Activated CD4-positive, alpha-beta T cell treated with anti-CD3 and anti-CD28 coated beads for 36 hours (primary cell): ENCODE measurements at regions of chr4 and their contacts with region 1.

Region 1: GRCh38 chr4:185640811-185641675 is 105.7 kb upstream of the PDLIM3 start:
- DNase-seq: no peak
- ATAC-seq: no peak
- H3K4me3 Mint-ChIP-seq: no peak overlapping the region
- H3K27ac Mint-ChIP-seq: no peak overlapping the region
- H3K4me1 Mint-ChIP-seq: peaks cover 3% of the 10 kb centered on the region
- H3K27me3 Mint-ChIP-seq: peaks cover 22% of the 10 kb centered on the region

Region 2: GRCh38 chr4:186021461-186022167 is 380.6 kb after region 1 on chr4:
- CTCF ChIA-PET with region 1: no interaction called
- POLR2A ChIA-PET with region 1: no interaction called
- intact Hi-C with region 1: loop called (anchors 5 kb)
- DNase-seq: peak; percentile 9
- ATAC-seq: no peak
- H3K4me3 Mint-ChIP-seq: no peak overlapping the region
- H3K27ac Mint-ChIP-seq: no peak overlapping the region
- H3K4me1 Mint-ChIP-seq: no peaks in the 10 kb centered on the region
- H3K27me3 Mint-ChIP-seq: peaks cover 11% of the 10 kb centered on the region

Region 3: GRCh38 chr4:186037692-186038658 is 396.9 kb after region 1 on chr4:
- CTCF ChIA-PET with region 1: interaction called, 28 read pairs
- POLR2A ChIA-PET with region 1: no interaction called
- intact Hi-C with region 1: loop called (anchors 1 to 2 kb)
- DNase-seq: peak; percentile 23
- ATAC-seq: no peak
- H3K4me3 Mint-ChIP-seq: no peak overlapping the region
- H3K27ac Mint-ChIP-seq: no peak overlapping the region
- H3K4me1 Mint-ChIP-seq: no peaks in the 10 kb centered on the region
- H3K27me3 Mint-ChIP-seq: peaks cover 17% of the 10 kb centered on the region